Natural killer cell (primary cell): ENCODE measurements at regions of chr5 and their contacts with region 1.

Region 1: GRCh38 chr5:135887351-135887864 is 8.2 kb downstream of the IL9 start:
- DNase-seq: peak; percentile 44 to 79
- ATAC-seq: peak; percentile 65 to 95 (median 70)
- H3K4me3 ChIP-seq: no peak overlapping the region
- H3K4me3 Mint-ChIP-seq: no peak overlapping the region
- H3K27ac ChIP-seq: no peak overlapping the region
- H3K27ac Mint-ChIP-seq: no peak overlapping the region
- H3K4me1 ChIP-seq: peaks cover 4% of the 10 kb centered on the region
- H3K4me1 Mint-ChIP-seq: peaks cover 6 to 7% of the 10 kb centered on the region in 2 donors
- H3K27me3 ChIP-seq: no peaks in the 10 kb centered on the region
- H3K27me3 Mint-ChIP-seq: peaks cover 24 to 36% of the 10 kb centered on the region in 2 donors
- CTCF ChIP-seq: peak; percentile 92

Region 2: DNA sequence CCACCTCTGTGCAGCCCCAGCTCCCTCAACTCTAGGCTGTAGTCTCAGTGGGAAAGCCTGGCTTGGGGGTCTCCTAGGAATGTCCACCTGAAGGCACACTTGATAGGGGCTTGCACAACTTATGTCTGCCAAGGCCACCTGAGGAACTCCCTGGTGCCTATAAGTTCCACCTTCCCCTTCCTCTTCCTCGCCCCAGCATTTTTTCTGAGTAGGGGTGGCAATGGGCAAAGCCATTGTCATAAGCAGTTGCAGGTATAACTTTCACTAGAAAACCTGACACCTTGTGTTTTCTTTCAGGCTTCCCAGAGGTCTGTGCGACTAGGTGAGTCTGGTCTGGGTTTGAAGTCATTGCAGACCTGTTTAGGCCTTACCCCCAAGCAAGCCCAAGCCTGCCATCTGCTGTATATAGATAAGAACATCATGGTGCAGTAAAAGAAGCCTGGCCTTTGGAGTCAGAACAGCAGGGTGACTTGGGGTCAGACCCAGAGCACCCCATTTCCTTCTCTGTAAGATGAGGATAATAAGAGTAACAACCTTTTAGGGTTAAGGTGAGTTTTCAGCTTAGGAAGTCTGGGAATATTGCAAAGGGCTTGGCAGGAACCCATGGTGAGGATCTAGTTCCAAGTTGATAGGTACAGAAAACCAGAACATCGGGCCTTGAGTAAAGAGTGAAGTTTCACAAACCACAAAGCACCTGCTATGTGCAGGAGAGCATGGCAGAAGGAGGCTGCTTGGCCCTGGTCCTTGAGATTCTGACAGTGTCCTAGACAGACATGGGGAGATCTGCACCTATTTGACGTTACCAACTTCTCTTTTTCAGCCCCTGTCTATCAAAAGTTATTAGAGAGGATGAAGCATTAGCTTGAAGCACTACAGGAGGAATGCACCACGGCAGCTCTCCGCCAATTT is 175.2 kb after region 1 on chr5:
- intact Hi-C with region 1: loop called (anchors 1 kb)
- DNase-seq: peak in 1 of 2 donors; percentile 56
- ATAC-seq: peak in 2 of 3 donors; percentile 38 to 61
- H3K4me3 ChIP-seq: no peak overlapping the region
- H3K4me3 Mint-ChIP-seq: no peak overlapping the region
- H3K27ac ChIP-seq: no peak overlapping the region
- H3K27ac Mint-ChIP-seq: no peak overlapping the region
- H3K4me1 ChIP-seq: no peaks in the 10 kb centered on the region
- H3K4me1 Mint-ChIP-seq: no peaks in the 10 kb centered on the region
- H3K27me3 ChIP-seq: no peaks in the 10 kb centered on the region
- H3K27me3 Mint-ChIP-seq: peaks cover 3 to 5% of the 10 kb centered on the region in 2 donors
- CTCF ChIP-seq: no peak

Region 3: DNA sequence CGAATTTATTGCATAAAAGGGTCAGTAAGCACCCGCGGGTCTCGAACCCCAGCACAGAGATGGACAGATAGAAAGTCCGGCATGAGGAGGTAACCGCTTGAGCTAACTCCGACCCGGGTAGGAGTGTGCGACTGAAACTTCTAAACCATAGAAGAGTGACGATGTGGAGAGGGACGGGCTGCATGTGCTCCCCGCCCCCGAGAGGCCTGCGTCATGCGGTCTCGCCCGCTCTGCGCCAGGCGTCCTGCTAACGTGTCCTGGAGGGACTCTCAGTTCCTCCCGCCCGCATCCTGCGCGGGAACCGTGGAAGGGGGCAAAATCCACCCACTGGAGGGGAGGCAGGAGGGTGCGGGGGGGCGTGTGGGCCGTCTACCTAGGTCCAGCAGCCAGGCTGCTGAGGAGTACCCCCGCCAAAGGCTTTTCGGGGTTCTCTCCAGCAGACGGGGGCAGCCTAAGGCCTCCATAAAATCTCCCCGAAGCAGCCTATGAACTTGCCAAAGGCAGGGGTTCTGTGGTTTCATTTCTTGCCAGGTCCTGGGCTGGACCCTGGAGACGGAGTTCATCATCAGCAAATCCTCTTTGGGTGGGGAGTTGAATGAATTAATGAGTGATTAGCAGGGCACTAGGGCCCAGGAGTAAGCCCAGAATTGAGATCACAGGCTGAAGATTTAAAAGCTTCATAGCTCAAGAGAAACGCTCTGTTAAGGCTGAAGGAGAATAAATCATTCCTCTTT is 193.2 kb after region 1 on chr5:
- intact Hi-C with region 1: loop called (anchors 1 kb)
- DNase-seq: peak; percentile 47 to 69
- ATAC-seq: peak; percentile 77 to 96 (median 92)
- H3K4me3 ChIP-seq: peak overlapping the region; percentile 2
- H3K4me3 Mint-ChIP-seq: peak overlapping the region; percentile 67
- H3K27ac ChIP-seq: no peak overlapping the region
- H3K27ac Mint-ChIP-seq: peak overlapping the region in 1 of 2 donors; percentile 59
- H3K4me1 ChIP-seq: peaks cover 16% of the 10 kb centered on the region
- H3K4me1 Mint-ChIP-seq: peaks cover 0 to 12% of the 10 kb centered on the region in 2 donors
- H3K27me3 ChIP-seq: peaks cover 7% of the 10 kb centered on the region
- H3K27me3 Mint-ChIP-seq: peaks cover 32 to 39% of the 10 kb centered on the region in 2 donors
- CTCF ChIP-seq: no peak

Region 4: GRCh38 chr5:136212252-136212721 is 324.9 kb after region 1 on chr5:
- intact Hi-C with region 1: loop called (anchors 1 kb)
- DNase-seq: peak; percentile 38 to 65
- ATAC-seq: peak in 1 of 3 donors; percentile 58
- H3K4me3 ChIP-seq: no peak overlapping the region
- H3K4me3 Mint-ChIP-seq: no peak overlapping the region
- H3K27ac ChIP-seq: no peak overlapping the region
- H3K27ac Mint-ChIP-seq: no peak overlapping the region
- H3K4me1 ChIP-seq: no peaks in the 10 kb centered on the region
- H3K4me1 Mint-ChIP-seq: no peaks in the 10 kb centered on the region
- H3K27me3 ChIP-seq: no peaks in the 10 kb centered on the region
- H3K27me3 Mint-ChIP-seq: peaks cover 4 to 6% of the 10 kb centered on the region in 2 donors
- CTCF ChIP-seq: peak; percentile 85